Mucosa of descending colon (tissue), 3 donors: ENCODE measurements at regions of chr15 and their contacts with region 1.

Region 1: GRCh38 chr15:69502470-69503045 is 49.9 kb downstream of the RPLP1 start:
- DNase-seq: no peak
- ATAC-seq: no peak
- H3K4me3 ChIP-seq: no peak overlapping the region
- H3K4me1 ChIP-seq: no peaks in the 10 kb centered on the region
- CTCF ChIP-seq: no peak

Region 2: DNA sequence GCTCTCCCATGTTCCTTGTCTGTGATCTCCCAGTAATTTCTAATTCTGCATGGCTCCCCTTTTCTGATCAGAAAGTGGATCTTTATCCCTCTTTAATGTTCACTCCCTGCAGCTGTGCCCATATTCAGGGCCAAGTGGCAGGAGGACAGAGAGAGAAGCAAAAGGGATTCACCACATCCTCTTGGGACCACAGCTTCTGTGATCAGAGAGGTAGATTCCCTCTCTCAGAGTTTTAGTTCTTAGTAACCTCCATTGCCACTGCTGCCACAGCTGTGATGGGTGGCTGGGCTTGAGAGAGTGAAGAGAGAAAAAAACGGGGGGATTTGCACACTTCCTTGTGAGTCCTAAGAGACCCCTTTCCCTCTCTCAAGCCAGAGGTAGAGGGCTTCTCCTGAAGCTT is 292.9 kb before region 1 on chr15:
- intact Hi-C with region 1: no loop called
- DNase-seq: no peak
- ATAC-seq: no peak
- H3K4me3 ChIP-seq: no peak overlapping the region
- H3K4me1 ChIP-seq: no peaks in the 10 kb centered on the region
- CTCF ChIP-seq: no peak

Region 3: GRCh38 chr15:69452692-69453521 is 49.7 kb before region 1 on chr15 and contains the start of gene RPLP1:
- intact Hi-C with region 1: no loop called
- DNase-seq: peak; percentile 97 to 98 (median 97)
- ATAC-seq: peak; percentile 95
- H3K4me3 ChIP-seq: peak within 1 kb of the TSS; percentile 55
- H3K4me1 ChIP-seq: peaks cover 26% of the 10 kb centered on the region
- CTCF ChIP-seq: no peak
- total RNA-seq, gene RPLP1: 1,139 to 1,221 (median 1,218) TPM

Region 4: GRCh38 chr15:70584838-70585706 is 1082.5 kb after region 1 on chr15:
- intact Hi-C with region 1: loop called in 1 of 2 experiments (anchors 5 kb)
- DNase-seq: peak in 1 of 3 donors; percentile 19
- ATAC-seq: peak; percentile 41
- H3K4me3 ChIP-seq: no peak overlapping the region
- H3K4me1 ChIP-seq: no peaks in the 10 kb centered on the region
- CTCF ChIP-seq: no peak